SK-N-SH (cell line): ENCODE measurements at regions of chr10 and their contacts with region 1.

Region 1: DNA sequence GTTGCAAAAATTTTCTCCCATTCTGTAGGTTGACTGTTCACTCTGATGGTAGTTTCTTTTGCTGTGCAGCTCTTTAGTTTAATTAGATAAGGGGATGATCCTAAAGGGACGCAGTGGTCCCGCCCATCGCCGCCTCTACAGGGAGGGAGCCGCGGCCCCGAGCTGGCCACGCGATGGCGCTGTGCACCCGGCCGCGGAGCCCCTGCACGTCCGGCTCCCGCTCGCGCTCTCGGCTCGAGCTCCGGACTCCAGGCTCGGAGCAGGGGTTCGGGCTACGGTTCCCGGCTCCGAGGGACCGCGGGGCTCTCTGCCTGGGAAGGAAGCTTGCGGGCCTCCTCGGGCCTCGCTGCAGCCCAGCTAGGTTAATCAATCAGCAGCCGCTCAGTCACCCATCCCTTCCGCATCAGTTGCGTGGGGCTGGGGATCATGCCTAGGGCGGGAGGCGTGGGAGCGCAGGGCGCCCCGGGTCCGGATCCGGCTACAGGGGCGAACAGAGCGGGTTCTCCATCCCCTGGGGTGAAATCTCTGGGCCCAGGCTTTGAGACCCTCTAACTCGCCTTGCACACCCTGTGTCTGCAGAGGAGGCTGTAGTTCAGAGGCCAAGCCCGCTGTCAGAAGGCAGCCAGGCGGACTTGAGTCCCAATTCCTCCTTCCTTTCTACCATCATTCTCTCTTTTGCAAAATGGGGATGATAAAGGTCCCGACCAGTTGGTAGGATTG is 97.9 kb downstream of the WDR11 start:
- DNase-seq: peak; percentile 86
- H3K4me3 ChIP-seq: no peak overlapping the region; a peak in 1 of 4 replicates
- H3K27ac ChIP-seq: no peak overlapping the region
- H3K4me1 ChIP-seq: no peaks in the 10 kb centered on the region; a peak in 1 of 4 replicates
- H3K27me3 ChIP-seq: no peaks in the 10 kb centered on the region
- CTCF ChIP-seq: peak; percentile 53
- EP300 ChIP-seq: no peak
- RAD21 ChIP-seq: peak; percentile 69

Region 2: DNA sequence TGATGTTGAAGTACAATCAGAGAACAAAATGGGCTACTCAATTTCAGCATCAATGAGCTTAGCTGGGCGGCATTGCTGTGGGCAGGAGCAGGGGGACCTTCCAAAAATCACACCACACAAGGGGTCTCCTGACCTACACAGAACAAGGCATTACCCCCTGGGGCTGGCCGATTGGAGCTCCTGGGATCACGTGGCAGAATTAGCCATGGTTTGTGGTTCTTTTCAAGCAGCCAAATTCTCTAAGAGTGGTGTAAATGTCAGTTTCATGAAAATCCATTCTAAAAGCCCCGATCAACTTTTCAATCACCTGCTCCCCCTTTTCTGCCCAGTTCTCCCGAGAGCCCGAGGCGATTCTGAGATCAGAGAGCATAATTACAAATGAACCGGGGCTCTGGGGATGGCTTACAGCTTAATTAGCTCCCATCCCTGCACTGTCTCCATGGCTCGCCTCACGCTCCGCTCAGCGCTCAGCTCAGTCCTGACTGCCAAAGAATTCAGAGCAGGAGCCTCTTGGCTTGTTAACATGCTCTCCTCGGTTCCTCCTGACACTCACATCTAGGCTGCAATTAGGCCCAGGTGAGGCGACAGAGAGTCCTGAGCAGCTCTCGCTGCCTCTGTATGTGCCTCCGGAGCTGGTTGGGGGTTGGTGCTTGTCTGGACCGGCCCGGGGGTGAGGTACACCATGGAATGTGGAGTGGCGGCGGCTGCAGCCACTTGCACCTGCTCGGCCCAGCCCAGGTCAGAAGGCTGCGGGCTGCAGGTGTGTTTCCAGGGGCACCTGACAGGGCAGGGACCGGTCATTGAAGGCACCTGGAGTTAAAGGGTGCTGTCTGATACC is 13.9 kb after region 1 on chr10:
- CTCF ChIA-PET with region 1: interaction called, 10 read pairs
- POLR2A ChIA-PET with region 1: no interaction called
- DNase-seq: peak; percentile 38
- H3K4me3 ChIP-seq: no peak overlapping the region
- H3K27ac ChIP-seq: no peak overlapping the region
- H3K4me1 ChIP-seq: no peaks in the 10 kb centered on the region
- H3K27me3 ChIP-seq: no peaks in the 10 kb centered on the region
- CTCF ChIP-seq: no peak
- EP300 ChIP-seq: no peak
- RAD21 ChIP-seq: no peak